ENCODE measurements at regions of chr11 and their contacts with region 1.

Region 1: DNA sequence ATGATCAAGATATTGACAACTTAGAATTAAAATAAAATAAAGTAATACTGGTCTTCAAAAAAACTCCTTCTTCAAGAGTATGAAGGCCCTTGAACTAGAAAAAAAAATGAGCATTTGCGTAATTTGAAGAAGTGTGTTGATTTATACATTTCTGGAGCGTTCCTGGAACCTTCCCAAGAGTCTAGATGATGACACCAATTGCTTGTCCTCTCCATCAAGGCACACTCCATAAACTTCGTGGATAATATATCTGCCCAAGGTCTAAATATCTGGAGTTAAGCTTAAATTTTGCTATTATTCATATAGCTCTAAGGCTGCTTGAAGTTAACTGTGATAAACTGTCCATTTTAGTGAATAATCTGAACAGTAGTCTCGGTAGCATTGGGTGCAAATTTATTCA is 361.3 kb upstream of the CNTN5 start:
- DNase-seq: no peak
- H3K4me3 ChIP-seq: no peak overlapping the region
- H3K27ac ChIP-seq: no peak overlapping the region
- H3K4me1 ChIP-seq: no peaks in the 10 kb centered on the region
- H3K27me3 ChIP-seq: no peaks in the 10 kb centered on the region
- CTCF ChIP-seq: no peak
- POLR2A ChIP-seq: no peak

Region 2: GRCh38 chr11:98711011-98711410 is 51.6 kb after region 1 on chr11:
- intact Hi-C with region 1: loop called (anchors 10 kb)
- DNase-seq: no peak
- H3K4me3 ChIP-seq: no peak overlapping the region
- H3K27ac ChIP-seq: no peak overlapping the region
- H3K4me1 ChIP-seq: no peaks in the 10 kb centered on the region
- H3K27me3 ChIP-seq: no peaks in the 10 kb centered on the region
- CTCF ChIP-seq: no peak
- POLR2A ChIP-seq: no peak

Measured in spleen (tissue), 13 donors.